Ascending aorta (tissue), 2 donors: ENCODE measurements at regions of chr4 and their contacts with region 1.

Region 1: GRCh38 chr4:38759113-38759789 is 23.5 kb downstream of the TLR10 start:
- DNase-seq: peak in 1 of 2 donors; percentile 73
- H3K4me3 ChIP-seq: no peak overlapping the region
- H3K27ac ChIP-seq: no peak overlapping the region
- H3K4me1 ChIP-seq: no peaks in the 10 kb centered on the region
- H3K27me3 ChIP-seq: no peaks in the 10 kb centered on the region
- CTCF ChIP-seq: peak; percentile 58 to 68 (median 59)

Region 2: DNA sequence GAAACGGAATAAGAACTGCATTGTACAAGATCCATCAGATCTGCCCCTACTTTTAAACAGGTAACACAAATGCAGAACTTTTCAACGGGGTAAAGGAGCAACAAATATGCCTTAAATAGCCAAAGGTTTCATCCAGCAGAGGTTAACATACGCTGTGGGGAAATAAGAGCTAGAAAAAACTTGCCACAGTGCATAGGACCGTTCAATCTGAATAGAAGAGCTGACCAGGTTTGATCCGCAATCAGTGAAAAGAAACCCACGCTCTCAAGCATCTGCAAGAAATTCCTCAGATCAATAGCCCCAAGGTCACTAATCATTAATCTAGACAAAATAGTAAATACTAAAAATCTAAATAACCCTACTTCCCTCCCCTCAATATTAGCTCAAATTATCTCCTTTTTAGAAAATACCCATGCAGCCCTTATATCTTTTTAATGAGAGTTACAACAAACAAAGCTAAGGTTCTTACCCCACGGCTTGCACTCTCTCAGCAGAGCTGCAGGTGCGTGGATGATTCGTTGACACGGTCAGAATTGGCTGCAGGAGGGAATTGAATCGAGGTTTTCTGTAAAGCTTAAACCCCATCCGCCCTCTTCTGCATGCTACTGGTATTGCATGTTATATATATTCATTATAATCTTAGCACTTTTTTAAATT is 23.3 kb after region 1 on chr4 and contains the start of gene TLR10:
- intact Hi-C with region 1: loop called (anchors 1 kb)
- DNase-seq: no peak
- H3K4me3 ChIP-seq: no peak within 1 kb of the TSS
- H3K27ac ChIP-seq: no peak within 1 kb of the TSS
- H3K4me1 ChIP-seq: no peaks in the 10 kb centered on the region
- H3K27me3 ChIP-seq: no peaks in the 10 kb centered on the region
- CTCF ChIP-seq: peak; percentile 42 to 70 (median 62)
- total RNA-seq, gene TLR10: not detected

Region 3: DNA sequence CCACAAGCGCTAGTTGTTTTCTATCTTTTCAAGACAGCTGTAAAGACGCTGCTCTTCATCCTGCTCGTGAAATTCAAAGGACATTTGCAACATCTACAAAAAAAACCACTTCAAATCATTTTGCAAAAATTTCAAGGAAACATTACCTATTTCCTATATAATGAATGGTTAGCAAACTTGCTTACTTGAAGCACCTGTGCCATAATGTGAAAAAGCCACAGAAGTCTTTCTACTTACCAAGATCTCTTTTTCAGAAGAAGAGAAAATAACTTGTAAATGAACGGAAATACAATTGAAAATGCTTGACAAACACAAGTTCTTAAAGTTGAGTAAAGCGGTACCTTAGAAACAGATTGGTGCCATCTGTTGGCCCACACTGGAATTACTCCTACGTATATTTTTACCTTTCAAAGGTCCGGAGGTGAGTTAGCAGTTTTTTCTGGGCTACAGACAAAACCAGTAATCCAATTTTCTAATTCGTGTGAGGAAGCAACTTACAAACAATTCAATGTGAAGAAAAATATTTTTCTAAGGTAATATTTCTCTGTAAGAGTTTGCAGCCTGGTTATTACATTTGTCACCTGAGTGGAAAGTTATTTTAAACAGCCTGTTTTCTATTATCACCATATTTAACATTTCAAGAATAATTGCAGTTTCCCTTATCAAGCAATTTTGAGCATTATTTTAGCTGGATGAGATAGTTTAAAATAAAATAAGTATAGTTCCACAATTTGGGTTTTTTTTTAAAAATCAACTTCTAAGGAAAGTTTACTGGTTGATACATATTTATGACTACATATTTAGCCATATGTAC is 97.5 kb after region 1 on chr4 and contains the start of gene TLR6:
- intact Hi-C with region 1: loop called (anchors 2 kb)
- DNase-seq: peak in 1 of 2 donors; percentile 69
- H3K4me3 ChIP-seq: peak within 1 kb of the TSS; percentile 41 to 59
- H3K27ac ChIP-seq: peak within 1 kb of the TSS; percentile 9 to 50
- H3K4me1 ChIP-seq: no peaks in the 10 kb centered on the region
- H3K27me3 ChIP-seq: no peaks in the 10 kb centered on the region
- CTCF ChIP-seq: peak; percentile 41 to 71 (median 61)
- total RNA-seq, gene TLR6: 0.11 TPM

Region 4: GRCh38 chr4:38894340-38894982 is 135.2 kb after region 1 on chr4:
- intact Hi-C with region 1: loop called (anchors 1 kb)
- DNase-seq: no peak
- H3K4me3 ChIP-seq: no peak overlapping the region
- H3K27ac ChIP-seq: no peak overlapping the region
- H3K4me1 ChIP-seq: peaks cover 0 to 7% of the 10 kb centered on the region in 2 donors
- H3K27me3 ChIP-seq: no peaks in the 10 kb centered on the region
- CTCF ChIP-seq: peak in 1 of 3 experiments; percentile 19

Region 5: DNA sequence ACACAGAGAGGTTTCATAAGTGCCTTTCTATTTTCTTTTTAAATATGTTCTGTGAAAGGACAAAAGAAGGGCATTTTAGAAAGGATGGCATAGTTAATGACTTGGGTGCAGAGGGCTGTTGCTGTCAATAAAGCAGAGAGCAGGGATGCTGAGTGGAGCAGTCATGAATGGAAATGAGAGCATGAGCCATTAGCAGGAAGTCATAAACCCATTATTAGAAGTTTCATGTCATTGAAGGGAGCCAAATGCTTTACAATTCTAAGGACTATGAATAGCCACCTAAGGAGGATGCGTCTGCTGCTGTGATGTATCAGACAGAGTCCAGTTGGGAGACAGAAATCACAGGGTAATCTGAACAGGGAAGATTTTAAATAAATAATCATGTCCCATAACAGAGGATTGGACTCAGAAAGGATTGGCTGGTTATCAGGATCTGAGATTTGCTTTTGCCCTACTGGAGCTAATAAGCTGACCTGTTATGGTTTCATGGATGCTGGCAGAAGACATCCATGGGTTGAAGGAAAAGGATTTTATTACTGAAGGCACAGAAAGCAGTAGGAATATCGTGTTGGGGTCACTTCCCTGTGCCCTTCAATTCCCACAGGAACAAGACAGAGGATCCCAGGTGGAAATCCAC is 375.6 kb after region 1 on chr4:
- intact Hi-C with region 1: loop called (anchors 5 kb)
- DNase-seq: no peak
- H3K4me3 ChIP-seq: no peak overlapping the region
- H3K27ac ChIP-seq: no peak overlapping the region
- H3K4me1 ChIP-seq: no peaks in the 10 kb centered on the region
- H3K27me3 ChIP-seq: no peaks in the 10 kb centered on the region
- CTCF ChIP-seq: no peak